ENCODE measurements at regions of chr1 and their contacts with region 1.

Region 1: GRCh38 chr1:199684686-199685273 is 342.7 kb upstream of the NR5A2 start:
- DNase-seq: peak; percentile 63
- H3K4me3 Mint-ChIP-seq: no peak overlapping the region
- H3K27ac Mint-ChIP-seq: no peak overlapping the region
- H3K4me1 Mint-ChIP-seq: peaks cover 41% of the 10 kb centered on the region
- H3K27me3 Mint-ChIP-seq: no peaks in the 10 kb centered on the region
- CTCF ChIP-seq: peak; percentile 71

Region 2: GRCh38 chr1:199948587-199949280 is 264.0 kb after region 1 on chr1:
- CTCF ChIA-PET with region 1: interaction called, 7 read pairs
- intact Hi-C with region 1: loop called (anchors 10 kb)
- DNase-seq: no peak
- H3K4me3 Mint-ChIP-seq: no peak overlapping the region
- H3K27ac Mint-ChIP-seq: no peak overlapping the region
- H3K4me1 Mint-ChIP-seq: no peaks in the 10 kb centered on the region
- H3K27me3 Mint-ChIP-seq: no peaks in the 10 kb centered on the region
- CTCF ChIP-seq: no peak

Region 3: GRCh38 chr1:200022239-200022804 is 337.5 kb after region 1 on chr1:
- CTCF ChIA-PET with region 1: no interaction called
- intact Hi-C with region 1: loop called (anchors 5 kb)
- DNase-seq: peak; percentile 35
- H3K4me3 Mint-ChIP-seq: no peak overlapping the region
- H3K27ac Mint-ChIP-seq: peak overlapping the region; percentile 97
- H3K4me1 Mint-ChIP-seq: peaks cover 43% of the 10 kb centered on the region
- H3K27me3 Mint-ChIP-seq: no peaks in the 10 kb centered on the region
- CTCF ChIP-seq: no peak

Region 4: GRCh38 chr1:200139661-200140250 is 455.0 kb after region 1 on chr1:
- CTCF ChIA-PET with region 1: no interaction called
- intact Hi-C with region 1: loop called (anchors 5 kb)
- DNase-seq: peak; percentile 46
- H3K4me3 Mint-ChIP-seq: no peak overlapping the region
- H3K27ac Mint-ChIP-seq: no peak overlapping the region
- H3K4me1 Mint-ChIP-seq: no peaks in the 10 kb centered on the region
- H3K27me3 Mint-ChIP-seq: no peaks in the 10 kb centered on the region
- CTCF ChIP-seq: peak; percentile 69

Region 5: GRCh38 chr1:200184196-200184595 is 499.4 kb after region 1 on chr1:
- CTCF ChIA-PET with region 1: no interaction called
- intact Hi-C with region 1: loop called (anchors 1 kb)
- DNase-seq: peak; percentile 86
- H3K4me3 Mint-ChIP-seq: no peak overlapping the region
- H3K27ac Mint-ChIP-seq: peak overlapping the region; percentile 20
- H3K4me1 Mint-ChIP-seq: peaks cover 51% of the 10 kb centered on the region
- H3K27me3 Mint-ChIP-seq: no peaks in the 10 kb centered on the region
- CTCF ChIP-seq: no peak

Region 6: DNA sequence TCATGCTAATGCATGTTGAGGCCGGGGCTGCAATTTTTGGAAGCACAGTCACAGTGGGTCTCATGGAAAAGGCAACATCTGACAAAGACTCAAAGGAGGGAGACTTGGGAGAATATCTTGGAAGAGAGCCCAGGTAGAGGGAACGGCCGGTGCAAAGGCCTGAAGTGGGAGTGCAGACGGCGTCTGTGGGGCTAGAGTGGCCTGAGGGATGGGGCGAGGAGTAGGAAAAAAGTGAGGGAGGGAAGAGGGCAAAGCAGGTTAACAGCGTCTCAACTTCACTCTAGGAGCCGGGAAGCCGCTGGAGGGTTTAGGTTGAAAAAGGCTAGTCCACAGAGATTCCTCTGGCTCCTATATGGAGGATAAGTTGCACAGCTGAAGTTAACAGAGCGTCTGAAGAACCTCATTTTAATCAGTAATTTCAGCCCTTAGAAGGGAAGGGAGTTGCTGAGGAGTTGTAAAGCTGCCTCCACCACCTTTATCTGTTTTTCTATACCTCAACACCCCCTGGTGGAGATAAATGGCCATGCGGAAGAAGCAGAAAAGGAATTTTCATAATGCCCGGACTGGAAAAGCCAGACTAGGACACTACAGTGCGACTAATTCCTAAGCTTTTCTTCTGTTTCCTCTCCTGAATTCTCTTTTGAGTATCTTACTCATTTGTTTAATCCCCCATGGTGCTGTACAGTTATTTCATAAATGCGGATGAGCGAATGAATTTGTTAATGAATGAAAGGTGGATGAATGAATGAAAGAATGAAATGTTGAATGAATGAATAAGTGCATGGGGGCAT is 803.8 kb after region 1 on chr1:
- CTCF ChIA-PET with region 1: interaction called, 4 read pairs
- intact Hi-C with region 1: loop called (anchors 10 kb)
- DNase-seq: peak; percentile 77
- H3K4me3 Mint-ChIP-seq: no peak overlapping the region
- H3K27ac Mint-ChIP-seq: peak overlapping the region; percentile 46
- H3K4me1 Mint-ChIP-seq: peaks cover 20% of the 10 kb centered on the region
- H3K27me3 Mint-ChIP-seq: no peaks in the 10 kb centered on the region
- CTCF ChIP-seq: peak; percentile 76

Region 7: GRCh38 chr1:200510228-200510623 is 825.4 kb after region 1 on chr1:
- CTCF ChIA-PET with region 1: interaction called, 3 read pairs
- intact Hi-C with region 1: loop called (anchors 2 kb)
- DNase-seq: peak; percentile 81
- H3K4me3 Mint-ChIP-seq: no peak overlapping the region
- H3K27ac Mint-ChIP-seq: no peak overlapping the region
- H3K4me1 Mint-ChIP-seq: no peaks in the 10 kb centered on the region
- H3K27me3 Mint-ChIP-seq: peaks cover 17% of the 10 kb centered on the region
- CTCF ChIP-seq: peak; percentile 78